Natural killer cell (primary cell): ENCODE measurements at regions of chr11 and their contacts with region 1.

Region 1: GRCh38 chr11:86869966-86870570 is 69.7 kb downstream of the PRSS23 start:
- DNase-seq: peak; percentile 22 to 57
- ATAC-seq: peak; percentile 68 to 84 (median 72)
- H3K4me3 ChIP-seq: no peak overlapping the region
- H3K4me3 Mint-ChIP-seq: no peak overlapping the region
- H3K27ac ChIP-seq: no peak overlapping the region
- H3K27ac Mint-ChIP-seq: no peak overlapping the region
- H3K4me1 ChIP-seq: no peaks in the 10 kb centered on the region
- H3K4me1 Mint-ChIP-seq: no peaks in the 10 kb centered on the region
- H3K27me3 ChIP-seq: no peaks in the 10 kb centered on the region
- H3K27me3 Mint-ChIP-seq: no peaks in the 10 kb centered on the region
- CTCF ChIP-seq: peak; percentile 75

Region 2: GRCh38 chr11:86802601-86803051 is 67.4 kb before region 1 on chr11:
- intact Hi-C with region 1: no loop called
- DNase-seq: peak in 1 of 2 donors; percentile 43
- ATAC-seq: peak in 2 of 3 donors; percentile 27 to 32
- H3K4me3 ChIP-seq: peak overlapping the region; percentile 75
- H3K4me3 Mint-ChIP-seq: peak overlapping the region; percentile 96
- H3K27ac ChIP-seq: peak overlapping the region; percentile 10
- H3K27ac Mint-ChIP-seq: peak overlapping the region; percentile 88 to 95
- H3K4me1 ChIP-seq: peaks cover 46% of the 10 kb centered on the region
- H3K4me1 Mint-ChIP-seq: peaks cover 71 to 74% of the 10 kb centered on the region in 2 donors
- H3K27me3 ChIP-seq: no peaks in the 10 kb centered on the region
- H3K27me3 Mint-ChIP-seq: no peaks in the 10 kb centered on the region
- CTCF ChIP-seq: peak; percentile 60

Region 3: DNA sequence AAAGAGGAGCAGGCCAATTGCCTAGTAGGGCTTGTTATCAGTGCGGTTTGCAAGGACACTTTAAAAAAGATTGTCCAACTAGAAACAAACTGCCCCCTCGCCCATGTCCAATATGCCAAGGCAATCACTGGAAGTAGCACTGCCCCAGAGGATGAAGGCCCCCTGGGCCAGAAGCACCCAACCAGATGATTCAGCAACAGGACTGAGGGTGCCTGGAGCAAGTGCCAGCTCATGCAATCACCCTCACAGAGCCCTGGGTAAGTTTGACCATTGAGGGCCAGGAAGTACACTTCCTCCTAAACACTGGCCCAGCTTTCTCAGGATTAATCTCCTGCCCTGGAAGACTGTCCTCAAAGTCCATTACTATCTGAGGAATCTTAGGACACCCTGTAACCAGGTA is 21.2 kb before region 1 on chr11:
- intact Hi-C with region 1: no loop called
- DNase-seq: no peak
- ATAC-seq: no peak
- H3K4me3 ChIP-seq: no peak overlapping the region
- H3K4me3 Mint-ChIP-seq: no peak overlapping the region
- H3K27ac ChIP-seq: no peak overlapping the region
- H3K27ac Mint-ChIP-seq: no peak overlapping the region
- H3K4me1 ChIP-seq: no peaks in the 10 kb centered on the region
- H3K4me1 Mint-ChIP-seq: no peaks in the 10 kb centered on the region
- H3K27me3 ChIP-seq: no peaks in the 10 kb centered on the region
- H3K27me3 Mint-ChIP-seq: no peaks in the 10 kb centered on the region
- CTCF ChIP-seq: no peak

Region 4: GRCh38 chr11:86919557-86920210 is 49.6 kb after region 1 on chr11:
- intact Hi-C with region 1: loop called (anchors 1 kb)
- DNase-seq: peak in 1 of 2 donors; percentile 41
- ATAC-seq: peak in 2 of 3 donors; percentile 44 to 55
- H3K4me3 ChIP-seq: no peak overlapping the region
- H3K4me3 Mint-ChIP-seq: no peak overlapping the region
- H3K27ac ChIP-seq: no peak overlapping the region
- H3K27ac Mint-ChIP-seq: no peak overlapping the region
- H3K4me1 ChIP-seq: peaks cover 8% of the 10 kb centered on the region
- H3K4me1 Mint-ChIP-seq: peaks cover 20 to 24% of the 10 kb centered on the region in 2 donors
- H3K27me3 ChIP-seq: no peaks in the 10 kb centered on the region
- H3K27me3 Mint-ChIP-seq: no peaks in the 10 kb centered on the region
- CTCF ChIP-seq: peak; percentile 38